Pancreas (tissue), 10 donors: ENCODE measurements at regions of chr15 and their contacts with region 1.

Region 1: DNA sequence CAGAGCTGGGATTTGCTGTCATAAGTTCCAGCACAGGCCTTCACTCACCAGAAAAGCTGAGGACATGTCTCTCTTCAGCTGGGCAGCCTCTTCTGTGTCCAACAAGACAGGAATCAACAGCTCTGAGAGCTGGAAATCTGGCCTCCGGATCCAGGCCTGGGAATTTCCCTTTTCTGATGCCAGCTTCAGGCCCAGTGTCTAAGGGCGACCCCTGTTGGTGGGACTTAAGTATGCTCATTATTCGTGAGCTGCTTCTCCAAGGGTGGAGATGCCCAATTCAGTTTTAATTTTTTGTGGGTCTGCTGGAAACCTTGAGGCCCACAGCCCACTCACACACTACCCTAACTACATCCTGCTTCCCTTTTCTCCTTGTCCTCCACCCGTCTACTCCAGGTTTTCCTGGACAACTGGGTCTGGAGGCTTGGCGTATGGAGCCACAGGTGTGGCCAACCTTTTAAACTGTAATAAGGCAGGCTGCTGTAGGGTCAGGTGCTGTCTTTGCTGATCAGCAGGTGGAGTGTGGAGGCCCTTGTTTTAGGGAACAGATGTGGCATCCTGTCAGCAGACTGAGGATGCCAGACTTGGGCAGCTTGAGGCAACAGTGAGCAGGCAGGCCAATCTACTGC is 2.6 kb upstream of the CEMIP start:
- DNase-seq: peak; percentile 65 to 78 (median 73)
- ATAC-seq: peak in 3 of 4 donors; percentile 72 to 78 (median 76)
- H3K4me3 ChIP-seq: no peak overlapping the region
- H3K27ac ChIP-seq: no peak overlapping the region
- H3K4me1 ChIP-seq: peaks cover 0 to 9% (median 6%) of the 10 kb centered on the region in 3 donors
- H3K27me3 ChIP-seq: peaks cover 0 to 25% (median 5%) of the 10 kb centered on the region in 4 donors
- CTCF ChIP-seq: peak; percentile 62 to 86 (median 67)

Region 2: DNA sequence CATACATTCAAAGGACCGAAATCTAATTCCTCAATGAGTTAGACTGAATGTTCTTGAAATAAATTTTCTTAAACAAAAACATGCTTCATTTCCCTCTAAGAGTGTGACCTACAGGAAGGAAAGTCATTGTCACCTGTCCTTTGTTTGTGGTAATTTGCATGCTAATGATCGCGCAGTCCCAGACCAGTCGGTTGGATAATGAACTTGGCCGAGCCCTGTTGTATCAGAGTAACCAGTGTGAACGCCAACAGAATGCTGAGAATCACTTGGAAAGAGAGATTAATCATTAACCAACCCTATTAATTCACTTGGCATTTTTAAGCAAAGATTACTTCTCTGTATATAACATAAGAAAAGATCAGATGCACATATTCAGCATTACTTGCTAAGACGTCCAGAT is 380.4 kb before region 1 on chr15:
- intact Hi-C with region 1: no loop called
- DNase-seq: no peak
- ATAC-seq: peak in 3 of 4 donors; percentile 66 to 69 (median 69)
- H3K4me3 ChIP-seq: no peak overlapping the region
- H3K27ac ChIP-seq: no peak overlapping the region
- H3K4me1 ChIP-seq: peaks cover 0 to 3% (median 0%) of the 10 kb centered on the region in 3 donors
- H3K27me3 ChIP-seq: no peaks in the 10 kb centered on the region
- CTCF ChIP-seq: no peak

Region 3: GRCh38 chr15:80455668-80456442 is 320.7 kb before region 1 on chr15:
- intact Hi-C with region 1: loop called in 1 of 3 experiments (anchors 5 kb)
- DNase-seq: peak in 4 of 6 donors; percentile 38 to 65 (median 44)
- ATAC-seq: peak; percentile 87 to 93 (median 92)
- H3K4me3 ChIP-seq: no peak overlapping the region
- H3K27ac ChIP-seq: peak overlapping the region in 2 of 4 donors; percentile 8 to 19
- H3K4me1 ChIP-seq: peaks cover 0 to 4% (median 0%) of the 10 kb centered on the region in 3 donors
- H3K27me3 ChIP-seq: no peaks in the 10 kb centered on the region
- CTCF ChIP-seq: peak; percentile 68 to 87 (median 78)

Region 4: DNA sequence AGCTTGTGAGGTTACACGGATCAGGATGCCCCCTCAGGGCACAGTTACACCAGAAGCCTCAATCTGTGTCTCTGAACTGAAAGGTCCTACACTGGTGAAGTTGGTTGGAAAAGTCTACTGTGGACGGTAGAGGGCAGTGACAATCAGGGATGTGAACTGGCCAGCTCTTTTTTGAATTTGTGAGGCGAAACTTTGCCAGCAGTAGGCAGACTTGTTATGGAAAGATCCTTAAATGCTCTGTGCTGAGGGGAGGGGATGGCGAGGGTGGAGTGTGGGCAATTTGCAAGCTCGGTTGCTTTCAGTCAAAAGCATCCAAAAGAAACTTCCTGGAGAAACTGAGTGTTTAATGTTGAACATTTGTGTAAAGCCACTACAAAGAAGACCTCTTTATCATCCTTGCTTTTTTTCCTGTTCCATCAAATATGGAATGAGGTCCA is 208.8 kb before region 1 on chr15:
- intact Hi-C with region 1: loop called in 2 of 3 experiments (anchors 5 kb)
- DNase-seq: peak in 3 of 6 donors; percentile 17 to 66 (median 24)
- ATAC-seq: peak; percentile 60 to 95 (median 92)
- H3K4me3 ChIP-seq: no peak overlapping the region
- H3K27ac ChIP-seq: no peak overlapping the region
- H3K4me1 ChIP-seq: no peaks in the 10 kb centered on the region
- H3K27me3 ChIP-seq: no peaks in the 10 kb centered on the region
- CTCF ChIP-seq: peak; percentile 23 to 56 (median 44)

Region 5: GRCh38 chr15:80870893-80871292 is 94.4 kb after region 1 on chr15:
- intact Hi-C with region 1: no loop called
- DNase-seq: no peak
- ATAC-seq: no peak
- H3K4me3 ChIP-seq: no peak overlapping the region
- H3K27ac ChIP-seq: no peak overlapping the region
- H3K4me1 ChIP-seq: no peaks in the 10 kb centered on the region
- H3K27me3 ChIP-seq: no peaks in the 10 kb centered on the region
- CTCF ChIP-seq: no peak